ENCODE measurements at regions of chr17 and their contacts with region 1.

Region 1: DNA sequence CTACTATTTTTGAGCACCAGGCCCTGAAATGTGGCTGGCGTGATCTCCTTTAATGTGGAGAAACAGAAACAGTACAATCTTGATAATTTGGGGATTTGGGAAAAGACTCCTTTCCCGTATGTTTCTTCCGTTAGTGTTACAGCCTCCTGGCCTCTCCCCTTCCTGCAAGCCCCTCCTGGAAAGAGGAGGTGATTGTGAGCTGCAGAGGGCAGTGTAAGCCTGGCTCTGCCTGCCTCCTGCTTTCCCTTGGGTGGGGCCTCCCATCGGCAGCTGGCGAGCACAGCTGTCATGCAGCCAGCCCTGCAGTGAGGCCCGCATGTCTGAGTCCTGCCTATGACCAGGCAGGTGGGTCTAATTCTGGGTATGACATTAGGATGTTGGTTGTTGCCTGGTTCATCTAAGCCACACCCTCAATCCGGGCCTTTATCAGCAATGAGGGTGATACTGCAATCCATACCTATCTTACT is 48.7 kb upstream of the WSB1 start:
- DNase-seq: peak; percentile 78 to 90
- ATAC-seq: peak; percentile 80

Region 2: GRCh38 chr17:27038676-27039075 is 206.6 kb before region 1 on chr17:
- intact Hi-C with region 1: no loop called
- DNase-seq: no peak
- ATAC-seq: no peak

Region 3: DNA sequence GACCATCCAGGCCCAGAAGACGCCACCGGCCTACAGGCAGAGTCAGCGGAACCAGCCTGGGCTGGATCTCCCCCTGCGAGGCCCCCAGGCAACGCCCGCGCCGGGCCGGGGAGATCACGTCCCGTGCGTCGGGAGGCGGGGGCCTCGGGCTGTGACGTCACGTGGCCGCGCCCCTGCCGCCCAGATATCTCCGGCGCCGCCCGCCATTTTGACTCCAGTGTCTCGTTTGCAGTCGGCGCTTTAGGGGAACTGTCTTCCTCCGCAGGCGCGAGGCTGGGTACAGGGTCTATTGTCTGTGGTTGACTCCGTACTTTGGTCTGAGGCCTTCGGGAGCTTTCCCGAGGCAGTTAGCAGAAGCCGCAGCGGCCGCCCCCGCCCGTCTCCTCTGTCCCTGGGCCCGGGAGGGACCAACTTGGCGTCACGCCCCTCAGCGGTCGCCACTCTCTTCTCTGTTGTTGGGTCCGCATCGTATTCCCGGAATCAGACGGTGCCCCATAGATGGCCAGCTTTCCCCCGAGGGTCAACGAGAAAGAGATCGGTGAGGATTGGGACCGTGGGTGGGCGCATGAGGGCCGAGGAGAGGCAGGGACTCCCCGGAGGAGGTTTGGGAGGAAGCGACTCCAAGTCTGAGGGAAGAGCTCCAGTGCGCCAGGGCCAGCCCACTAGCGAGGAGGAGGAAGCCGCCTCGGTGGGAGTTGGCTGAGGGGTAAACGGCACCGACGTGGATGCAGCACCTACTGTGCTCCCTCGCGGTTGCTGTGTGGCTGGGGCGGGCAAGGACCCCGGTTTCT is 48.8 kb after region 1 on chr17 and contains the start of gene WSB1:
- intact Hi-C with region 1: loop called in 1 of 2 experiments (anchors 10 kb)
- DNase-seq: peak; percentile 92 to 96
- ATAC-seq: peak; percentile 88
- total RNA-seq, gene WSB1: 91.9 to 121 TPM

Region 4: DNA sequence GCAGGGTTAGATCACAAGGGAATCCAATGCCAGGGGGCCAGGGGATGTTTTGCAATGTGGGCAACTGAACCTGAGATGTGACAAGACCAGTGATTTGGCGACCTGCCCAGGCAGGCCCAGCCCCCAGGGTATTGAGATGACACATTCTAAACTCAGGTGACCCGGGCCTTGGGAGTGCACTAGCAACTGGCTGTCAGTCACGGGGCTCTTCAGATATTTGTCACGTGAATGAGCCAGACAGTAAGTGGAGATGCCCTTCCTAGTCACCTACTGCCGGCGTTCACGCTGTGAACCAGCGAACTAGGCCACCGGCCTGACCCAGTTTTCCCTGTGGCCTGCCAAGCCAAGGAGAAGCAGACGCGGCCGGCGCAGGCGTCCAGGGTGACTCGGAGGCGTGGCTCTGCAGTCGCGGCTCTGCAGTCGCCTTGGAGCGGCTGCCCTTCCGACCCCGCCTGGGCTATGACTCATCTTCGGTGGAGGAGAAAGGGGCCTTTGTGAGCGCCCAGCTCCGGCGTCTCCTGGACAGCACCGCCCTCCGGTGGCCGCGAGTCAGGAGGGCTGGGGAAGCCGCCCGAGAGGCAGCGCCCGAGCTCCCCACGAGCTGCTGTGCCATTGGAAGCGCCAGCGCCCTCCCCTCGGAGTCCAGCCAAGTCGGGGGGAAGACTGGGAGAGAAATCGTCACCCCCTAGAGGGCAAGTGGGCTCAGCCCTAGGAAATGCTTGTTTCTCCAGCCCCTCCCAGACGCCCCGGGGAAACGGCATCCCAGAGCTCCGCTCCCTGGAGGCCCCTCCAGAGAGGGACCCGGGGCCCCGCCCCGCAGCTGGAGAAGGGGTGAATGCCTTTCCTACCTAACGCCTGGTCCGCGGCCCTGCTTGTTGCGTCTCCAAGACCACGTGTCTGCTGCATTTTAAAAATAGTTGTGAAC is 87.5 kb after region 1 on chr17:
- intact Hi-C with region 1: loop called (anchors 2 to 10 kb)
- DNase-seq: peak; percentile 97 to 99
- ATAC-seq: peak; percentile 95

Measured in left colon (tissue), 2 donors.